Activated CD4-positive, alpha-beta T cell treated with anti-CD3 and anti-CD28 coated beads for 36 hours (primary cell): ENCODE measurements at regions of chr21 and their contacts with region 1.

Region 1: GRCh38 chr21:31354604-31355443 is 10.8 kb upstream of the TIAM1 start:
- DNase-seq: peak; percentile 88
- ATAC-seq: peak; percentile 88
- H3K4me3 Mint-ChIP-seq: peak overlapping the region; percentile 49
- H3K27ac Mint-ChIP-seq: peak overlapping the region; percentile 82
- H3K4me1 Mint-ChIP-seq: peaks cover 53% of the 10 kb centered on the region
- H3K27me3 Mint-ChIP-seq: no peaks in the 10 kb centered on the region

Region 2: DNA sequence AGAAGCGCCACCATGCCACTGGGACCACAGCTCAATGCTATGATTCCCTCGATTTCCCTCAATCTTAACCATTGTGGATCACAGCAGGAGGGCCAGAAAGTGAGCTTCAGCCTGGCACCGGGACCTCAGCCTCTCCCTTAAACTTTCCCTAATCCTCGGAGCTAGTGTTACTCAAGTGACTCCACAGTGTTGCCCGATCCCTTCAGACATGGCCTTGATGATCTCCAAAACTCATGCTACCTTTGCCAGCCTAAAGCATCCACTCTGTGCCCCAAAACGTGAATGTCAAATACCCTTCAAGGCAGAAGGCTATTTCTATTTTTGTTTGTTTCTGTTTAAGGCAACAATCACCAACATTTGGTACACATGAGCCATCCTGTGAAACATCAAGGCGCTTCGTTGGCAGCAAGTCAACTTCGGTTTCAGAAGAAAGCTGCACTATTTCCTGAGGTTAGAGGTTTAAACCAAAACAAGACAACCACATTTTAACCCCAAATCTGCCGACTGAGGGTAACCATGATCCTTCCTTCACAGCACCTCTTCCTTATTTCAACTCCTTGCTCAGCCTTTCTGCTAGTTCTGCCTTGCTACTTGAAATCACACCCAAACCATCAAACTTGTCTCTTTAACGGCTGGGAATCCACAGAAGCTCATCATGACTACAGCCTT is 222.1 kb before region 1 on chr21:
- CTCF ChIA-PET with region 1: no interaction called
- POLR2A ChIA-PET with region 1: no interaction called
- intact Hi-C with region 1: loop called (anchors 1 to 2 kb)
- DNase-seq: peak; percentile 84
- ATAC-seq: peak; percentile 75
- H3K4me3 Mint-ChIP-seq: peak overlapping the region; percentile 43
- H3K27ac Mint-ChIP-seq: peak overlapping the region; percentile 92
- H3K4me1 Mint-ChIP-seq: peaks cover 60% of the 10 kb centered on the region
- H3K27me3 Mint-ChIP-seq: no peaks in the 10 kb centered on the region

Region 3: DNA sequence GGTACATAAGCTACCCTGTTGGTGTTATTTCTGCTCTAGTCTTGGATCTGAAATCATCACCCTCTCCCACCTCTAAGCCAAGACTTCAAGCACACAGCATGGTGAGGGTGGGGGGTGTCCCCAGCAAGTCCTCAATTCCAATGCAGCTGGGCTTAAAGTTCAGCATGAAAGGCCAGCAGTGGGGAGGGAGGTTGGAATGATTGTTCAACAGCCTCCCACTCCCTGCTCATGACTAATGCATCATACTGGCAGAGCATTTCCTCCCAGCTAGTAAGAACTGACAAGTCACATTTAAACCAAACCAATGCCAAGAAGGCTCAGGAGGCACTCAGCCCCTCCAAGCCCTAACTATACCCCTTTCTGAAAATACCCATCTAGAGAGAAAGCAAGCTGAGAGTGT is 60.8 kb before region 1 on chr21:
- CTCF ChIA-PET with region 1: no interaction called
- POLR2A ChIA-PET with region 1: no interaction called
- intact Hi-C with region 1: loop called in 1 of 2 experiments (anchors 2 kb)
- DNase-seq: peak; percentile 85
- ATAC-seq: peak; percentile 94
- H3K4me3 Mint-ChIP-seq: no peak overlapping the region
- H3K27ac Mint-ChIP-seq: peak overlapping the region; percentile 79
- H3K4me1 Mint-ChIP-seq: peaks cover 47% of the 10 kb centered on the region
- H3K27me3 Mint-ChIP-seq: no peaks in the 10 kb centered on the region

Region 4: DNA sequence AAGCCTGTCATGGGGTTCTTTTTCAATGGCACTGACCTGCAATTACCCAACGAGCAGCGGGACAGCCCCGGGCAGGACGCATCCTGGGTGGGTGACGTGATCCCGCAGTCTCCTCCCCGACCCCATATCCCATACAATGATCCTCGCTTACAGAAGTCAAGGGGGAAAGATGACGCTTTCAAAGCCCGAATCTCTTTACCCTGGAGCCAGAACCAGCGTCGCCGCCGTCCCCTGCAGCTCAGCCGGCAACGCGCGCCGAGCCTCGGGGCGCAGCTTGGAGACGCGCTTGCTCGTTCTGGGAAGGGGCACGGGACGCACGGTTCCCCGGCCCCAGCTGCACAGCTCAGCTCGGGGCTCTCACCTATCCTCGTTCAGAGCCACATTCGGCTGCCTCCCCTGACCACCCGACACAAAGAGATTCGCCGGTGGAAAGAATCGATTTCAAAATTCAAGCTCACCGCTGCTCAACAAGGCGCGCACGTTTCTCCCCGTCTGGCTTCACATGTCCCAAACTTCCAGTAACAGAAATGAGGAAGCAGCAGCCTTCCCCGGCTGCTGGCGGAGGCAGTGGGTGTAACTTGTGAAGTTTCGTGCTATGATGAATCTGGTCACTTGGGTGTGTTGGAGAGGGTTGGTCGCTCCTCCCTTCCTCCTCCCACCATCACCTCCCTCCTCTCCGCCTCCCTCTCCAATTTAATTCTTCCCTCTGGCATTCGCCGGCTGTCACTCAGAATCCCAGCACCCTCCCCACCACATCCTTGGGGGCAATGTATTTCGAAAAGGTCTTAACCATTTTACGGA is 10.9 kb before region 1 on chr21 and contains the start of gene TIAM1:
- CTCF ChIA-PET with region 1: interaction called, 10 read pairs
- POLR2A ChIA-PET with region 1: interaction called, 10 read pairs
- intact Hi-C with region 1: loop called (anchors 1 kb)
- DNase-seq: peak; percentile 61
- ATAC-seq: peak; percentile 36
- H3K4me3 Mint-ChIP-seq: peak within 1 kb of the TSS; percentile 85
- H3K27ac Mint-ChIP-seq: peak within 1 kb of the TSS; percentile 93
- H3K4me1 Mint-ChIP-seq: peaks cover 56% of the 10 kb centered on the region
- H3K27me3 Mint-ChIP-seq: peaks cover 5% of the 10 kb centered on the region
- total RNA-seq, gene TIAM1: 60.7 to 72.6 TPM

Region 5: DNA sequence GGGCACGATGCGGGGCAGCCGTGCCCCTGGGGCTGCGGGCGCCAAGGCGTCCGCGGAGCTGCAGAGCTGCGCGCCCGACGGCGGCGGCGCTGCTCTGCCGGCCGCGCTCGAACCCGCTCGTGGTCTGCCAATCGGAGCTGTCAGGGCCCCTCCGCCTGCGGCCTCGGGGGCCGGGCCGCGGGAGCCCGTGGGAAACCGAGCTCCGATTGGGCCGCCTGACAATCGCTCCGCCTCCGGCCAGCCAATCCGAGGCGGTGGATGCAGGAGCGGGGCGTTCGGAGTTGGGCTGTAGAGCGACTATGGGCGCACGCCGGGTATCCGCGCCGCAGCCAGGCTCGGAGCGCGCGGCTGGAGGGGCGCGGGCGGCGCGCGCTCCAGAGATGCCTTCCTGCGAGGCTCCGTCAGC is 204.1 kb after region 1 on chr21:
- CTCF ChIA-PET with region 1: interaction called, 3 read pairs
- POLR2A ChIA-PET with region 1: interaction called, 10 read pairs
- intact Hi-C with region 1: loop called (anchors 1 kb)
- DNase-seq: peak; percentile 97
- ATAC-seq: peak; percentile 88
- H3K4me3 Mint-ChIP-seq: peak overlapping the region; percentile 80
- H3K27ac Mint-ChIP-seq: no peak overlapping the region
- H3K4me1 Mint-ChIP-seq: peaks cover 34% of the 10 kb centered on the region
- H3K27me3 Mint-ChIP-seq: peaks cover 24% of the 10 kb centered on the region

Region 6: DNA sequence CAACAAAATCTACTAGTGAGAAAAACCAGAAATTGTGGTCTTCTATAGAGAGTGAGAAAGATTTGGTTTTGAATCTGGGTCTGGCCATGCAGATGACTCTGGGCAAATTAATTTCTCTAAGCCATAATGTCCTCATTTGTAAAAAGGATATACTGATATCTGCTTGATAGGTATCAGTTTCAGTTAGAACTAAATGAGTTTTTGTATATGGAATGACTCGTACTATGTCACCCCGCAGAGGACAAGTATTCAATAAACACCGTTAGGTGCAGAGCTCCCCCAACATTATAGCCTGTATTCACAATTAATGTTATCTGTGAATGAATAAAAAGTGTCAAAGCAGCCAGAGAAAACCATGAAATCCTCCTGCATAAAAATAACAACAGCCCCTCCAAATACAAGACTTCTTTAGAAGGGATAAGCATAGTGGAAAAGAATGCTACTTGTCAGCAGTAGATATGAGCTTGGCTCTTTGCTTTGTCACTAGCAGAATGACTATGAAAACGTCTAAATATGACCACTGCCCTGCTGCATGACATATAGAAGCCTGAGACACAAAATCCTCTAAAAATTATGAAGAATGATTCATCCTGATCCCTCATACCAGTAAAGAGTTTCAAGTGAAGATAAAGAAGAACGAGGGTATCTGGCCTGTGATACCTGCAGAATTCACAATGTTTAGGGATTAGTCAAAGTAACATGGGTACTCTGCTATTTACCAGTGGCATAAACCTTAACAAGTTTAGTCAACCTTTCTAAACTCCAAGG is 359.3 kb after region 1 on chr21:
- CTCF ChIA-PET with region 1: no interaction called
- POLR2A ChIA-PET with region 1: interaction called, 3 read pairs
- intact Hi-C with region 1: loop called in 1 of 2 experiments (anchors 2 kb)
- DNase-seq: no peak
- ATAC-seq: peak; percentile 95
- H3K4me3 Mint-ChIP-seq: no peak overlapping the region
- H3K27ac Mint-ChIP-seq: peak overlapping the region; percentile 74
- H3K4me1 Mint-ChIP-seq: peaks cover 84% of the 10 kb centered on the region
- H3K27me3 Mint-ChIP-seq: no peaks in the 10 kb centered on the region